ENCODE measurements at regions of chr3 and their contacts with region 1.

Region 1: GRCh38 chr3:113912552-113913236 is 35.1 kb upstream of the ZDHHC23 start:
- DNase-seq: no peak
- H3K4me3 ChIP-seq: no peak overlapping the region
- H3K27me3 ChIP-seq: no peaks in the 10 kb centered on the region
- CTCF ChIP-seq: peak; percentile 69

Region 2: DNA sequence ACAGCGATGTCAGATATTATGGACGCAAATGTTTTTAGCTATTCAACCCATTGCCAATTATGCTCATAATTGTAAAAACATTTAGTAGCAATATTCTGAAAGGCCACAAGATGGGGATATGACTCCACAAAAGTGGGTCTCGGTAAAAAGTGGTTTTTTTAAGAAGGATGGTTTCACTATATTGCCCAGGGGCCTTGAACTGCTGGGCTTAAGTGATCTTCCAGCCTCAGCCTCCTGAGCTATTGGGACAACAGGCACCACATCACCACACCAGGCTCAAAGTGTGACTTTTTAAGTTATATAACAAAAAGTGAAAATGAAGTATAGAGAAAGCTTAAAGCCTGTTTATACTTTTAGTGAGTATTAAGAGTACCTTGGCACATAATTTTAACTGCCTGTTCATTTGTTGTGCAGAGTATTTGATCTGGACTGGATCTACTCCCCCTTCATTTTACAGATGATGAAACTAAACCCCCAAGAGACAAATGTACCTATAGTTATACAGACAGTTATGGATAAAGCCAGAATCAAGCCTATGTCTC is 176.1 kb before region 1 on chr3:
- CTCF ChIA-PET with region 1: interaction called, 14 read pairs
- POLR2A ChIA-PET with region 1: no interaction called
- DNase-seq: no peak
- H3K4me3 ChIP-seq: no peak overlapping the region
- H3K27me3 ChIP-seq: no peaks in the 10 kb centered on the region
- CTCF ChIP-seq: peak; percentile 58

Region 3: GRCh38 chr3:113802795-113803455 is 109.8 kb before region 1 on chr3:
- CTCF ChIA-PET with region 1: no interaction called
- POLR2A ChIA-PET with region 1: no interaction called
- DNase-seq: no peak
- H3K4me3 ChIP-seq: no peak overlapping the region
- H3K27me3 ChIP-seq: no peaks in the 10 kb centered on the region
- CTCF ChIP-seq: no peak

Region 4: DNA sequence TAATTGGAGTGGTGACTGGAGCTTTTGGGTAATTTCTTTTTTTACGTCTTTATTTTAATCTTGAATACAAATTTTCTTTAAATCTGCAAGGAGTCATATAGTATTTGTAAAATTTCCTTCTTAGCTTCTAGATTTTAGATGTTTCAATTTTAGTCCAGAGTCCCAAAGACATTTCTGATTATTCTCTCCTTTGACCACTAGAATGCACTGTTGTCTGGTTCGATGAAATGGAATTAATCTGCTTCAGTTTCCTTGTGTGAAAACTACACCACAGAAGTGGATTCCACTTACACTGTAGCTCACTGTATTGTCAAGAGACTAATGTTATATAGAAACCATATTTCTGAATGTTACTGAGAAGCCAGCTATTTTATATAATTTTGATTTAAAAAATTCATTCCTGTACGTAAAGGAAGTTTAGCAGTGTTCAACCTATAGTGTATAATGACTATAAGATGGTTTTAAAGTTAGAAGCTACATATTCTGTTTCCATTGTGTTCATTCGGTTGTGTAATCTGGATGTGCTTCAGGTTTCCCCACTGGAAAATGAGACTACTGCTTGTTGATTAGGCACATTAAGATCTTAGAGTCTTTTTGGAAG is 68.0 kb before region 1 on chr3:
- CTCF ChIA-PET with region 1: interaction called, 39 read pairs
- POLR2A ChIA-PET with region 1: no interaction called
- DNase-seq: no peak
- H3K4me3 ChIP-seq: no peak overlapping the region
- H3K27me3 ChIP-seq: no peaks in the 10 kb centered on the region
- CTCF ChIP-seq: peak; percentile 52

Region 5: GRCh38 chr3:114122027-114122709 is 209.5 kb after region 1 on chr3:
- CTCF ChIA-PET with region 1: no interaction called
- POLR2A ChIA-PET with region 1: no interaction called
- DNase-seq: peak; percentile 5
- H3K4me3 ChIP-seq: no peak overlapping the region
- H3K27me3 ChIP-seq: no peaks in the 10 kb centered on the region
- CTCF ChIP-seq: no peak

Region 6: DNA sequence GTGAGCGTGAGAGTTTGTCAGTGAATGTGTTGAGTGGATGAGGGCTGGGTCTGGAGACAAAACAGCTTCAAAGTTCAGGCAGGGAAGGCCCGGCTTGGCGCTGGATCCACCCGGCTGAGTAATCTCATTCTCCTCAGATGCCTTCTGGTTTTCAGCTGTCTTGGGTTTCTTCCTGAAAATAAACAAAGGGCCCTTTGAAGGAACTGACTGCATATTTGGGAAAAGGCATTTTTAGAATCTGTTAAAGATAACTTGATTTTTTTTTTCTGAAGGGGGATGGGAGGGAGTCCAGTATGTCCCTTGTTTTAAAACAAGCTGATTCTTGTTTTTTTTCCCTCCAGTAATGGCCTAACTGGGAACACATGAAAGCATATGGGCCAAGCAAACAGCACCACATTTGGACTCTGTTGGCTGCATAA is 467.5 kb after region 1 on chr3:
- CTCF ChIA-PET with region 1: no interaction called
- POLR2A ChIA-PET with region 1: no interaction called
- DNase-seq: peak; percentile 86
- H3K4me3 ChIP-seq: no peak overlapping the region
- H3K27me3 ChIP-seq: no peaks in the 10 kb centered on the region
- CTCF ChIP-seq: no peak

Measured in BJ (cell line).